ENCODE measurements at regions of chr1 and their contacts with region 1.

Region 1: DNA sequence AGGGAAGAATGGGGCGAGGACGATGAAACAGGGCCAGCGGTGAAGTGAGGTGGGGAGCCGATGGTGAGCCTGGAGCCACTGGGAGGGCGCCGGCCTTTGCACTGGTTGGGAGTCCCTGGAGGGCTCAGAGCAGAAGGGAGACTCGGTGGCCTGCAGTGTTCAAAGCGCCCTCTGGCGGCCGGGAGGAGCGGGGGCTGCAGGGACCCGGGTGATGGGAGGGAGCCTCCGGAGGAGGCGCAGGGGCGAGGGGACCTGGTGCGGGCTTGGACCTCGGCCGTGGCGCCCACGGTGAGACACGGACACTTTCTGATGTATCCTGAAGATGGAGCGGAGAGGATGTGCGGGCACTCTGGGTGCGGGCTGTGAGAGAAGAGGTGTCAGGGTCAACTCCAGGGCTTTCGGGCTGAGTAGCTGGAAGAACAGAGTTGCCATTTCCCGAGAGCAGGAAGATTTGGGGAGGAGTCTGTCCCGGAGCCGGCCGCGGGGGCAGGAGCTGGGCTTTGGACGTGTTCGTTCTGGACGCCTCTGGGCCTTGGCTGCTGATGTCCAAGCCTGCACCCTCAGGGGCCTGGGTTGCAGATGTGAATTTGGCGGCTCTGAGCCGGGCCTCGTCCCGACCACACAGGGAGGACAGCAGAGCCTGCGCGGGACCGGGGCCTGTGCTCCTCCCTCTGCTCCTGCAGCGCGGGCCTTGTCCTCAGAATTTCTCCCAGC is 29.7 kb downstream of the HEYL start:
- DNase-seq: peak; percentile 67
- H3K4me3 Mint-ChIP-seq: no peak overlapping the region
- H3K27ac Mint-ChIP-seq: no peak overlapping the region
- H3K4me1 Mint-ChIP-seq: peaks cover 10% of the 10 kb centered on the region
- H3K27me3 Mint-ChIP-seq: no peaks in the 10 kb centered on the region

Region 2: DNA sequence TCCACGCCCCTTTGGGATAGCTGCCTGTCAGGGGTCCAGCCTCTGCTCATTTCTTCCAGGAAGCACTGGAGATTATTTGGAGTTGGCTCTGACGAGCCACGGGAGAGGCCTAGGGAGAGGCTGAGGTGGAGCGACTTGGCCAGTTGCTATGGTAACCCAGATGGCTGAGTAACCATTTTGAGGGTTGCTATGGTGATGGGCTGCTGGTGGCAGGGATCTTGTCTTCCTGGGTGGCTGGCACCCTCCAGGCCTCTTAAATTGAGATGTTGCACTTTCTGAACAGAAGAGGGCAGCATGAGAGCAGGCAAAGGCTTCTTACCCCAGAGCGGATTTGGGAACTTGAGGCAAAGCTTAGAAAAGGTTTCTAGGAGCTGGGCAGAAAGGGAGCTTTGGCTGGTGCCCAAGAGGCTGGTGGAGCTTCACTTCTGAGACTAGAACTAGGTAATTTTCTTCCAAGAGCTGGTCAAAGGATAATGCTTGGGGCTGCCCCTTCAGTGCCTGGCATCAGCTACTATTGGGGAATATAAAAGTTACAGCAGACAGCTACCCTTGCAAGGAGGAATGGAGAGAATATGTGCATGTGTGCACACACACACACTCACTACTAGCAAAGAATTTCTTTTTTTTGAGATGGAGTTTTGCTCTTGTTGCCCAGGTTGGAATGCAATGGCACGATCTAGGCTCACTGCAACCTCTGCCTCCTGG is 511.1 kb before region 1 on chr1:
- intact Hi-C with region 1: loop called (anchors 1 kb)
- DNase-seq: peak; percentile 53
- H3K4me3 Mint-ChIP-seq: no peak overlapping the region
- H3K27ac Mint-ChIP-seq: peak overlapping the region; percentile 40
- H3K4me1 Mint-ChIP-seq: peaks cover 30% of the 10 kb centered on the region
- H3K27me3 Mint-ChIP-seq: peaks cover under 1% of the 10 kb centered on the region

Region 3: GRCh38 chr1:39653546-39654031 is 43.8 kb after region 1 on chr1:
- intact Hi-C with region 1: loop called (anchors 1 kb)
- DNase-seq: peak; percentile 67
- H3K4me3 Mint-ChIP-seq: no peak overlapping the region
- H3K27ac Mint-ChIP-seq: no peak overlapping the region
- H3K4me1 Mint-ChIP-seq: peaks cover 21% of the 10 kb centered on the region
- H3K27me3 Mint-ChIP-seq: peaks cover 3% of the 10 kb centered on the region

Region 4: GRCh38 chr1:39720094-39720999 is 110.6 kb after region 1 on chr1:
- intact Hi-C with region 1: loop called (anchors 1 kb)
- DNase-seq: no peak
- H3K4me3 Mint-ChIP-seq: no peak overlapping the region
- H3K27ac Mint-ChIP-seq: no peak overlapping the region
- H3K4me1 Mint-ChIP-seq: no peaks in the 10 kb centered on the region
- H3K27me3 Mint-ChIP-seq: peaks cover 55% of the 10 kb centered on the region

Region 5: DNA sequence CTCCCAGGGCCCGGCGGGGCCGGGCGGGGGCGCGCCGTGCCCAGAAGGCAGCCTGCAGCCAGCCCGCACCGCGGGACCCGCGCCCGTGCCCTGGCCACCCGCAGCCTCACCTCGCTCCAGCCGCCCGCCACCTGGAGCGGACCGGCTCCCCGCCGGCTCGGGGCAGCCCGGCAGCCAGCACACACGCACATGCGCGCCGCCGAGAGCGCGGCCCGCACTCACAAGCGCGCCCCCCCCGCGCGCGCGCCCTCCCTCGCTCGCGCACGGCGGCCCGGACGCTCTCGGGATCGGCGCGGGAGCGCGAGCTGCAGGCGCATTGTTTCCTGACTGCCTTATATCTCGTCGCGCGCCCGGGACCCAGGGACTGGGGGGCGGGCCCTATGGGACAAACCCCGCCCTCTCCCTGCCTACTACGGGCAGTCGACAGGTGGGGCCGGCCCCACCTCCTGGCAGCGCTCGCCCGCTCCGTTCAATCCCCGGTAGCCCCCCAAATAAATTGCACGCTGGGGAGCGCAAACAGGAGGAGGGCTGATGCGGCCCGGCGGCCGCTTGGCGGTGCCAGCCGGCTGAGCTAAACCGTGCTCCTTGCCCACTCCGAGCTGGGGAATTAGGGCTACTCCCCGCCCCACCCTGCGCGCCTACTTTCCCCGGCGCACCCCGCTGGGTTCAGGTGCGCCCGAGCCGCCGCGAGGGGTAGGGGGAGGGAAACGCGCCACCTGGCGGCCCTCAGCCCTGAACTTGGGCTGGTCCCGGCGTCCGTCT is 292.1 kb after region 1 on chr1 and contains the start of gene MYCL:
- intact Hi-C with region 1: loop called (anchors 1 kb)
- DNase-seq: peak; percentile 56
- H3K4me3 Mint-ChIP-seq: peak within 1 kb of the TSS; percentile 74
- H3K27ac Mint-ChIP-seq: no peak within 1 kb of the TSS
- H3K4me1 Mint-ChIP-seq: no peaks in the 10 kb centered on the region
- H3K27me3 Mint-ChIP-seq: peaks cover 73% of the 10 kb centered on the region
- total RNA-seq, gene MYCL: 0.56 and 0.62 TPM in 2 replicates